Activated CD4-positive, alpha-beta memory T cell treated with anti-CD3 and anti-CD28 coated beads, Interleukin-2, amount 10 ng/mL, durations not matched to agents 7 days and 5 days (primary cell): ENCODE measurements at regions of chr13 and their contacts with region 1.

Region 1: GRCh38 chr13:24671386-24672107 is 8.7 kb upstream of the ATP12A start:
- DNase-seq: no peak
- H3K4me3 Mint-ChIP-seq: no peak overlapping the region
- H3K27ac Mint-ChIP-seq: no peak overlapping the region
- H3K4me1 Mint-ChIP-seq: peaks cover 19% of the 10 kb centered on the region
- H3K27me3 Mint-ChIP-seq: peaks cover under 1% of the 10 kb centered on the region

Region 2: DNA sequence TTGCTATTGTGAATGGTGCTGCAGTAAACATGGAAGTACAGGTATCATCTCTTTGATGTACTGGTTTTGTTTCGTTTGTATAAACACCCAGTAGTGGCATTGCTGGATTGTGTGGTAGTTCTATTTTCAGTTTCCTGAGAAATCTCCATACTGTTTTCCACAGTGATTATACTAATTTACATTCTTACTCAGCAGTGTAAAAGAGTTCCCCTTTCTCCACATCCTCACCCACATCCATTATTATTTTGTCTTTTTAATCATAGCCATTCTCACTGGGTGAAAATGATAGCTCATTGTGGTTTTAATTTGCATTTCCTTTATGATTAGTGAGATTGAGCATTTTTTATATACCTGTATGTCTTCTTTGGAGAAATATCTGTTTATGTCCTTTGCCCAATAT is 96.7 kb before region 1 on chr13:
- CTCF ChIA-PET with region 1: interaction called, 12 read pairs
- POLR2A ChIA-PET with region 1: no interaction called
- DNase-seq: no peak
- H3K4me3 Mint-ChIP-seq: no peak overlapping the region
- H3K27ac Mint-ChIP-seq: no peak overlapping the region
- H3K4me1 Mint-ChIP-seq: peaks cover 17% of the 10 kb centered on the region
- H3K27me3 Mint-ChIP-seq: peaks cover 1% of the 10 kb centered on the region

Region 3: DNA sequence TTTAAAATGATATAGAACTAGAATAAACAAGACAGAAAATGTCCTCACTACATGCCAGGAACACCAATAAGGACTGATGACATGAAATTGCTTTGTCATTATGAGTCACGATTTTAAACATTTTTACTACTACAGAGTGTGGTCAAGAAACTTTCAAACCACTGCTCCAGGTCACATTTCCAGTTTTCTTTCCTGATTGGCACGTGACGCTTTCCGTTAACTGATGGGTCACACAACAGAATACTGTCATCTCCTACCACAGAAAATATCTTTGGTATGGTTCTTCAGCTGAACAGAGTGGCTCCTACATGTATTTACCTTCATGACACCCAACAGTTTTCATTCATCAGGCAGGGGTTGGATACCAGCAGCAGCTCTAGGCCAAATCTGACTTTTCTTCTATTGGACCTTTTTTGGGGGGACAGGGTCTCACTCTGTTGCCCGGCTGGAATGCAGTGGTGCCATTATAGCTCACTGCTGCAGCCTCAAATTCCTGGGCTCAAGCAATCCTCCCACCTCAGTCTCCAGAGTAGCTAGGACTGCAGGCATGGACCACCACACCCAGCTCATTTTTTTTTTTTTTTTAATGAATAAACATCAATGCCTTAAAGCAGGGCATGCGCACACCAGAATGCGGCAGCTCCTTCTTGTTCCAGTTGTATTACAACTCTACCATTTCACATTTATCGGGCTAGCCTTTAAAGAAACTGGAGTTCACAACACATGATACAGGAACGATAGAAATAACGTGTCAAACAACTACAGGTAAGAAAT is 239.8 kb after region 1 on chr13:
- CTCF ChIA-PET with region 1: no interaction called
- POLR2A ChIA-PET with region 1: no interaction called
- DNase-seq: no peak
- H3K4me3 Mint-ChIP-seq: no peak overlapping the region
- H3K27ac Mint-ChIP-seq: no peak overlapping the region
- H3K4me1 Mint-ChIP-seq: peaks cover 14% of the 10 kb centered on the region
- H3K27me3 Mint-ChIP-seq: no peaks in the 10 kb centered on the region